HEK293 (cell line): ENCODE measurements at regions of chr12 and their contacts with region 1.

Region 1: DNA sequence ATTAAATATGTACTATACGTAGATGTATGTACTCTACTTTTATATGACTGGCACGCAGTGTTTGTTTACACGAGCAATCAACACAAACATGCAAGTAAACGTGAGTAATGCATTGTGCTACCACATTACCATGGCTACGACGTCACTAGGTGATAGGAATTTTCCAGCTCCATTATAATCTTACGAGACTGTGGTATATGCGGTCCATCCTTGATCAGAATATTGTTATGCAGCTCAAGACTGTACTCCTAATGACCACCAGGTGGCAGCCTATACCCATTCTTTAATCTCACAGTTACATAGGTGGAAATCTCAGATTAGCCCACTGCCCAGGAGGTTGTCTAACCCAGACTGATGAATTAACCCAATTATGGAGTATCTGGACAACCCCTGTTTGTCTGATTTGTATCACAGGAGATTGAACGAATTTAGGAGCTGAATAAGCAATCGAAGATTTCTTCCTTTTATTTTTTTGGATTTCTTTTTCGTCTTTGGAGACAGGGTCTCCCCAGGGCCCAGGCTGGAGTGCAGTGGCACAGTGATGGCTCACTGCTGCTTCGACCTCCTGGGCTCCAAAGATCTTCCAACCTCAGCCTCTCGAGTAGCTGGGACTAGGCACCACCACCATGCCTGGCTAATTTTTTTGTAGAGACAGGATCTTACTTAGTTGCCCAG is 8.7 kb upstream of the TESPA1 start:
- H3K4me3 ChIP-seq: no peak overlapping the region
- H3K27ac ChIP-seq: no peak overlapping the region
- H3K4me1 ChIP-seq: no peaks in the 10 kb centered on the region
- CTCF ChIP-seq: peak; percentile 60

Region 2: DNA sequence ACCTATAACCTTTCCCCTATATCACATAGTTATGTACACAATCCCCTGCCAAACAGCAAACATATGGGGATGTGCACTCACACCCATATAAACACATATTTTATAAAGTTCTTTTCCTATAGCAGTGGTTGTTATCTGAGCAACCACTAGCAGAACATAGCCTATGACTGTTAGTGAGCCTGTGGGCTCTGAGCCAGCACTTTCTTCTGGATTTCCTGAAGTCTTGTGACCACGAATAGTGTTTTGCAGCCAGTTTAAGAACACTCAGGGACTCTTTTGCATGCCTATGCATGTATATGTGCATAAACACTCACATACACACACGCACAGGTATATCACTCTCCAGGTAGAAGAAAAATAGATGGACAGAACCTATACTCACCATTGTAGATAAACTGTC is 25.8 kb before region 1 on chr12:
- CTCF ChIA-PET with region 1: interaction called, 17 read pairs
- POLR2A ChIA-PET with region 1: no interaction called
- H3K4me3 ChIP-seq: no peak overlapping the region
- H3K27ac ChIP-seq: no peak overlapping the region
- H3K4me1 ChIP-seq: no peaks in the 10 kb centered on the region
- CTCF ChIP-seq: no peak

Region 3: GRCh38 chr12:55019779-55020178 is 26.5 kb after region 1 on chr12 and contains the start of gene NEUROD4:
- CTCF ChIA-PET with region 1: interaction called, 12 read pairs
- POLR2A ChIA-PET with region 1: no interaction called
- H3K4me3 ChIP-seq: no peak within 1 kb of the TSS
- H3K27ac ChIP-seq: no peak within 1 kb of the TSS
- H3K4me1 ChIP-seq: no peaks in the 10 kb centered on the region; the same call in 1 of the 2 replicates
- CTCF ChIP-seq: no peak

Region 4: GRCh38 chr12:55043542-55043941 is 50.2 kb after region 1 on chr12:
- CTCF ChIA-PET with region 1: interaction called, 11 read pairs
- POLR2A ChIA-PET with region 1: no interaction called
- H3K4me3 ChIP-seq: no peak overlapping the region
- H3K27ac ChIP-seq: no peak overlapping the region
- H3K4me1 ChIP-seq: no peaks in the 10 kb centered on the region
- CTCF ChIP-seq: no peak

Region 5: GRCh38 chr12:55073043-55074022 is 80.0 kb after region 1 on chr12:
- CTCF ChIA-PET with region 1: interaction called, 271 read pairs
- POLR2A ChIA-PET with region 1: interaction called, 3 read pairs
- H3K4me3 ChIP-seq: no peak overlapping the region
- H3K27ac ChIP-seq: no peak overlapping the region
- H3K4me1 ChIP-seq: no peaks in the 10 kb centered on the region
- CTCF ChIP-seq: peak; percentile 47

Region 6: DNA sequence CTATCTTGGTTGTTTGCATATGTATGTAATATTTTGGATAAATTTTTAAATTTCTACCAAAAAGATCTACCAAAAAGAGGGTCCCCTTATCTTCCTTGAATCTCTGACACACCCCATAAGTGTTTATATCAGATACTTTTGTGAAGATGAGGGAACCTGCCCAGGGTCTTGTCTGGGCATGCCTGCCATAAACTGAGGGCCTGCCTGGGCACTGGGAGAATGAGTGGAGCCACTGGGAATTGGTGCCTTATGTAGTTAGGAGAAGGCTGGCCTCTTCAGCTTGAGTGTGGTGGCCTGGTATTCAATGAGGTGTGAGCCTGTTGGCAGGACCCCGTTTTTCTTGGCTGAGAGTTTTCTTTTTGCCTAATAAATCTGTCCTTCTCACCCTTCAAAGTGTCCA is 179.4 kb after region 1 on chr12:
- CTCF ChIA-PET with region 1: no interaction called
- POLR2A ChIA-PET with region 1: no interaction called
- H3K4me3 ChIP-seq: no peak overlapping the region
- H3K27ac ChIP-seq: no peak overlapping the region
- H3K4me1 ChIP-seq: no peaks in the 10 kb centered on the region
- CTCF ChIP-seq: no peak